IMR-90 (cell line): ENCODE measurements at regions of chr9 and their contacts with region 1.

Region 1: DNA sequence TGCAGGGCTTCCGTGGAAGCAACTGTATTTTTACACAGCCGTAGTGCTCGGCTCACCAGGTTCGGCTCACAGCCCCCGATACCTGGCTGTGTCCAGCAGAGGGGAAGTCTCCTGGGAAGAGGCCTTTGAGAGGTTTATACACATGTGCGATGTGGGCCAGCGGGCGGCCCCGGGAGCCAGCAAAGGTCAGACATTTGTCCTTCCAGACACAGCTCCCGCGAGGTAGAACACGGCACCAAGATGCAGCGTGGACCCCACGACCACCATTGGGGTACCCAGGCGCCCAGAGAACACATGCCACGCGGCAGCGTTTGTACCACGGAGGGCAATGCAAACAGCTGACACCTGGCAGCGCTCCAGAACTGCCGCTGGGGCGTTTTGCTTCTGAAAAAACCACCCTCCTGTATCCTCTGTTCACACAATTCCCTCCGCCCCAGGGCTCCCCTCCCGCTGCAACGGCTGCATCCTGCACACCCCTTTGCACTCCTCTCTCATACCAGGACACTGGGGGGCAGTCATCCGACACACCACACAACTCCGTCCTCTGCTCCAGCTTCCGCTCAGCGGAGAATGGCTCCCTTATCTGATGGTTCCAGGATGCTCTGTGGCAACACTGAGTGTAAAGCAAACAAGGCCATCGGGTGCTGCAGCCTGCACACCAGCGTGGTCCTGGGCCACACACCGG is 235.3 kb downstream of the SYK start:
- DNase-seq: peak; percentile 92
- ATAC-seq: peak; percentile 92
- H3K4me3 ChIP-seq: no peak overlapping the region
- H3K27ac ChIP-seq: peak overlapping the region; percentile 78
- H3K4me1 ChIP-seq: peaks cover 26% of the 10 kb centered on the region
- H3K27me3 ChIP-seq: no peaks in the 10 kb centered on the region
- CTCF ChIP-seq: peak; percentile 82
- POLR2A ChIP-seq: peak; percentile 37; the same call in 1 of the 2 replicates
- RAD21 ChIP-seq: peak; percentile 94

Region 2: DNA sequence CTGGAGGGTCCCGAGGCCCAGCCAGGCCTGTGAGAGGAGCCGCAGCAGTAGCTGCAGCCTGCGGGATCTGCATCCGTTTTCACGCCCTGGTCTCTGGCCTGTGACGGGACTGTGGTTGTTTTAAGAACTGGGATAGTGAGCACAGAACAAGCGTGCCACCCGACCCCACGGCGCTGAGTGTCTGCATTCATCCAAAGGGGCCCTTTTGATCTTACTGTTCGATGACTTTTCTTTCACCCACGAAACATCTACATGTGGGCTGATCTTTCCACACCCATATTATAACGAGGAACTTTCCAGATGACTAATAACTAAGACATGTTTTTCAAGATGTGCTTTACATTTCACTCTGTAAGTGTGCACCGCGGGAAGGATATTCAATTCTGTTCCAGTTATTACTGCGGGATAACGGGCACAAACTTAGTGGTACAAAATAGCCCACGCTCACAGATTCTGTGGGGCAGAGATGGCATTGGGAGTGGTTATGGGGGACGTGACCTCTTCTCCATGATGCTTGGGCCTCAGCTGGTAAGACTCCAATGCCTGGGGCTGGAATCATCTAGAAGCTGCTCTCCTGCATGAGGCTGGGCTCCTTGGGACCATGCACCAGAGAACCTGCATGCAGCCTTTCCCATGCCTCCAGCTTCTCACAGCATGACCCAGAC is 70.4 kb before region 1 on chr9:
- CTCF ChIA-PET with region 1: interaction called, 5 read pairs
- POLR2A ChIA-PET with region 1: no interaction called
- dilution Hi-C with region 1: no loop called
- in situ Hi-C with region 1: no loop called
- intact Hi-C with region 1: loop called (anchors 2 kb)
- DNase-seq: peak; percentile 49
- ATAC-seq: peak; percentile 27; the same call in 1 of the 2 replicates
- H3K4me3 ChIP-seq: no peak overlapping the region
- H3K27ac ChIP-seq: no peak overlapping the region
- H3K4me1 ChIP-seq: peaks cover 8% of the 10 kb centered on the region
- H3K27me3 ChIP-seq: no peaks in the 10 kb centered on the region
- CTCF ChIP-seq: no peak
- POLR2A ChIP-seq: no peak
- RAD21 ChIP-seq: no peak

Region 3: DNA sequence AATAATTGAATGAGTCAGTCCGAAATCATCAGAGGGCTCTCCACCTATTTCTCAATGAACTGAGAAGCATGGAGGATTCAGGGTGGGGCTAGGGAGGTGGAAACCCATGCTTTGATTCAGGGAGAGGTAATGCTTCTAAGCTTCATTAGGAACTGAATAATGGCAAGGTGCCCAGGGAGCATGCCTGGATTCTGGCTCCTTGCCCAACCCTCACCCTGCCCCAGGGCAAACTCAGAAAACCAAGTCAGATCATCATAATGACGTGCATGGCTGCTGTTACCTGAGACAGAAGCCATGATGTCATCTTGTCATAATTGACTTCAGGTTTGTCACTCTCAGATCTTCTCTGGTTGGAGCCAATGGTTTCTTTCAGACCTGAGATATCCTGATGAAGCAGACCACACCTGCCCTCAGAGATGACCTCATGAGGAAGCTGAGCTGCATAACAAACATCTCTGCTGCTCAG is 35.8 kb before region 1 on chr9:
- CTCF ChIA-PET with region 1: no interaction called
- POLR2A ChIA-PET with region 1: no interaction called
- dilution Hi-C with region 1: no loop called
- in situ Hi-C with region 1: no loop called
- intact Hi-C with region 1: no loop called
- DNase-seq: peak; percentile 61
- ATAC-seq: peak; percentile 51
- H3K4me3 ChIP-seq: no peak overlapping the region
- H3K27ac ChIP-seq: no peak overlapping the region
- H3K4me1 ChIP-seq: peaks cover 11% of the 10 kb centered on the region
- H3K27me3 ChIP-seq: no peaks in the 10 kb centered on the region
- CTCF ChIP-seq: no peak
- POLR2A ChIP-seq: no peak
- RAD21 ChIP-seq: no peak

Region 4: GRCh38 chr9:91164724-91165520 is 128.0 kb after region 1 on chr9:
- CTCF ChIA-PET with region 1: no interaction called
- POLR2A ChIA-PET with region 1: no interaction called
- dilution Hi-C with region 1: no loop called
- in situ Hi-C with region 1: no loop called
- intact Hi-C with region 1: loop called (anchors 5 kb)
- DNase-seq: peak; percentile 100
- ATAC-seq: peak; percentile 98
- H3K4me3 ChIP-seq: no peak overlapping the region
- H3K27ac ChIP-seq: peak overlapping the region; percentile 91
- H3K4me1 ChIP-seq: peaks cover 40% of the 10 kb centered on the region
- H3K27me3 ChIP-seq: no peaks in the 10 kb centered on the region
- CTCF ChIP-seq: no peak
- POLR2A ChIP-seq: peak; percentile 27; the same call in 1 of the 2 replicates
- RAD21 ChIP-seq: peak; percentile 38

Region 5: GRCh38 chr9:91361291-91362050 is 324.5 kb after region 1 on chr9 and contains the start of gene AUH:
- CTCF ChIA-PET with region 1: no interaction called
- POLR2A ChIA-PET with region 1: no interaction called
- dilution Hi-C with region 1: no loop called
- in situ Hi-C with region 1: no loop called
- intact Hi-C with region 1: loop called (anchors 1 kb)
- DNase-seq: peak; percentile 67
- ATAC-seq: peak; percentile 100
- H3K4me3 ChIP-seq: peak within 1 kb of the TSS; percentile 100
- H3K27ac ChIP-seq: peak within 1 kb of the TSS; percentile 80
- H3K4me1 ChIP-seq: peaks cover 6% of the 10 kb centered on the region
- H3K27me3 ChIP-seq: no peaks in the 10 kb centered on the region
- CTCF ChIP-seq: no peak
- POLR2A ChIP-seq: peak; percentile 75; the same call in 1 of the 2 replicates
- RAD21 ChIP-seq: no peak
- total RNA-seq, gene AUH: 8.1 and 12.8 TPM in 2 replicates

Region 6: DNA sequence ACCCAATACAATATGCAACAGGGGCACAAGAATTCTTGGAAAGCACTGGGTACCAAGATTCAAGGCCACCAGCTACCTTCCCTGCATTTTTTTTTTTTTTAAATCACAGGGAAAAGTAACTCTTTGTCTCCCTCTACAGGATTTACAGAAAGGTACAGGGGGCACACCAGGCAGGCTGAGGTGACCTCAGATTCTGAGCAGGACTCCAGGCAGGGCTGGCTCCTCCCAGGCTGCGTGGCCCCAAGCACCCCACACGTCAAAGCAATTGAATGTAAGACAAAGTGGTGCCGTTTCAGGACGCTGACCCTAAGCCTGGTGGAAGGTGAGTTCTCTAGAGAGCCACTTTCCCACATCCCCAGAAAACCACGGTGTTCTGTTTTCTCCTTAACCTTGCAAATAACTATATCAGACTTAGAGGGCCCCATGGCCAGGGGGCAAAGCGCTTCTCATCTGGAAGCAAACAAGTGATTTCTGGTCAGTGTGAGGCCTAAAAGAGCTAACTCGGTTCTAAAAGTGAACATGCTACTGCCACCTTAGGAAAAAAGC is 690.4 kb after region 1 on chr9:
- CTCF ChIA-PET with region 1: no interaction called
- POLR2A ChIA-PET with region 1: no interaction called
- dilution Hi-C with region 1: no loop called
- in situ Hi-C with region 1: no loop called
- intact Hi-C with region 1: loop called (anchors 2 kb)
- DNase-seq: peak; percentile 56
- ATAC-seq: peak; percentile 94
- H3K4me3 ChIP-seq: no peak overlapping the region
- H3K27ac ChIP-seq: no peak overlapping the region
- H3K4me1 ChIP-seq: peaks cover 5% of the 10 kb centered on the region; the same call in 1 of the 2 replicates
- H3K27me3 ChIP-seq: no peaks in the 10 kb centered on the region
- CTCF ChIP-seq: peak; percentile 73
- POLR2A ChIP-seq: no peak
- RAD21 ChIP-seq: peak; percentile 76